ENCODE measurements at regions of chr1 and their contacts with region 1.

Region 1: DNA sequence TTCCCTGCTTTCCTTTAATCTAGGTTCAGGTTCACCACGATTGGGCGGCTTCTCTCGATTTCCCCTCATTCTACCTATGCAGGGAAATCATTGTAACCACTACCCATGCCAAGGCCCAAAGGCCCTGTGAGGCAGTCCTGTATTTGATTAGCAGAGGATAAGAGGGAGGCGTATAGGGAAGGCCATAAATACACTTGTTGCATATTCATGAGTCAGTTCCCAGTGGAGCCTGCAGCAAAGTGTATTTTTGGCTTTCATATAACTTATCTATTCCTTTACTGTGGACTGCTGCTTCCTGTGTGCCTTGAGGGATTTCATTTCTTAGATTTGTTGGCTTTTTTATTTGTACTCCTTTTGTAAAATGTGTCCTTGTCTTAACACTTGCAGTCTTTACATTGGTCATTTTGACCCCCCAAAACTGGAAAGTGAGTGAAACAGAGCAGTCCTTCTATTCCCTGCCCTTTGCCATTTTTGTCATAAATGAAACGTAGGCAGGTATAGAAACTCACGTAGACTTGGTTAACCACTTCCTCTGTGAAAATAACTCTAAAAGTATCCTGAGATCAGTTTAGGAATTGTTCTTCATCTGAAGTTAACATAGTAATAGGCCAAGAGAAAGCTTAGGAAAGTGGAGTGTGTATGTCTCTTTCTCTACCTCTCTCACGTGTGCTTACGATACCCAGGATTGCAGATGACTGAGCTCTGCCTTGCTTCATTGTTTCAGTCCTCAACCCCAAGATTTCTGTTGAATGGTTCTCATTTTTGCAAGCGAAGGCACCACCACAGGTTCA is 19.6 kb upstream of the KCNQ4 start:
- DNase-seq: peak; percentile 18
- H3K4me3 Mint-ChIP-seq: no peak overlapping the region
- H3K27ac Mint-ChIP-seq: peak overlapping the region; percentile 78
- H3K4me1 Mint-ChIP-seq: peaks cover 32% of the 10 kb centered on the region
- H3K27me3 Mint-ChIP-seq: no peaks in the 10 kb centered on the region

Region 2: GRCh38 chr1:40699787-40700186 is 64.2 kb before region 1 on chr1:
- CTCF ChIA-PET with region 1: no interaction called
- POLR2A ChIA-PET with region 1: interaction called, 3 read pairs
- intact Hi-C with region 1: loop called (anchors 2 kb)
- DNase-seq: peak; percentile 23
- H3K4me3 Mint-ChIP-seq: no peak overlapping the region
- H3K27ac Mint-ChIP-seq: peak overlapping the region; percentile 69
- H3K4me1 Mint-ChIP-seq: peaks cover 81% of the 10 kb centered on the region
- H3K27me3 Mint-ChIP-seq: no peaks in the 10 kb centered on the region

Measured in activated CD4-positive, alpha-beta memory T cell treated with anti-CD3 and anti-CD28 coated beads for 36 hours (primary cell).